ENCODE measurements at regions of chr19 and their contacts with region 1.

Region 1: DNA sequence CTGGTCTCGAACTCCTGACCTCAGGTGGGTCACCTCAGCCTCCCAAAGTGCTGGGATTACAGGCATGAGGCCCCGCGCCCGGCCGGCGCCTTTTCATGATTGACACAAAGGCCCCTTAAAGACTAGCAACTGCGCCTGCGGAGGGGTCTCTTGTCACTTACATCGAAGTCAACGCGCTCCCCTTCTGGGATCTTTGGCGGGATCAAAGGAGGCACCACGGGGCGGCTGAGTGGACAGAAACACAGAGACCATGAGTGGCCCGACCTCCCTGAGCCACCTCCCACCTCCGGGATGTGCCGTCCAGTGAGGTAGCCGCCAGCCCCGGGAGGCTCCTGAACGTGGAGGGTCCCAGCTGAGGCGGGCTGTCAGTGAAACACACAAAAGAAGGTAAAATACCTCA is 7.3 kb downstream of the TNNT1 start:
- DNase-seq: no peak
- ATAC-seq: no peak
- H3K4me3 Mint-ChIP-seq: no peak overlapping the region
- H3K27ac Mint-ChIP-seq: no peak overlapping the region
- H3K4me1 Mint-ChIP-seq: peaks cover 7% of the 10 kb centered on the region
- H3K27me3 Mint-ChIP-seq: peaks cover 20% of the 10 kb centered on the region

Region 2: DNA sequence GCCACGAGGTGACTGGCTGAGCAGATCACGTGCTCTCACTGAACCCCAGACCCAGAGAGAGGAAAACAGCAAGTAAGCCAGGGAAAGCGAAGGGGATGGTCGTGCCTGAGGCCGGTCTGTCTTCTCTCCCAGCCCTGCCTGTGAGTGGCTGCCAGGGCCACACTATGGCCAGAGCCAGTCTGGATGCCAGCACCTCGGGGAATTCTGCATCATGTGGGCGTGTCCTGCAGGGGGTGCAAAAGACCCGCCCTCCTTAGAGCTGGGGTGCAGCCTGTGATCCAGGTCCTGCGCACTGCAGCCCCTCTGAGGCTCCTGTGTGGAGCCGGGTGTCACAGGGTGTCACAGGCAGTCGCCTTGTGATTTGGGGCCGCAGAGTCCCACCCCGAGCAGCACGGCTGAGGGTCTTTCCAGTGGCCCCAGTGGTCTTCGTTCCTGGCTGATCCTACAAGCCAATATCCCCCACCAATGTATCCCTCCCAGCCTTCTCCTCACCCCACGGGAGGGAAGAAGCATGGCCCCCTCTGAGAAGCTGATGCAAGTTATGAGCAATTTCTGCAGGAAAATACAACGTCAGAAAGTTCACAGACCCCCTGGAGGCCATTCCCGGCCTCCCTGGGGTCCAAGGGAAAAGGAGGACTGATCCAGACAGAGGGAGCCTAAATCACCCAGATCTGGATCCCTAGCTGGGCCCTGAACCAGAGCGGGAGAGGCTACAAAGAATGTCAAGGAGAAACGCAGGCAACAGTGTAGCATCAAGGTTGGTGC is 32.0 kb before region 1 on chr19:
- CTCF ChIA-PET with region 1: no interaction called
- POLR2A ChIA-PET with region 1: no interaction called
- DNase-seq: no peak
- ATAC-seq: no peak
- H3K4me3 Mint-ChIP-seq: no peak overlapping the region
- H3K27ac Mint-ChIP-seq: no peak overlapping the region
- H3K4me1 Mint-ChIP-seq: peaks cover 4% of the 10 kb centered on the region
- H3K27me3 Mint-ChIP-seq: no peaks in the 10 kb centered on the region

Region 3: GRCh38 chr19:55152010-55152409 is 10.3 kb after region 1 on chr19:
- CTCF ChIA-PET with region 1: interaction called, 12 read pairs
- POLR2A ChIA-PET with region 1: no interaction called
- DNase-seq: no peak
- ATAC-seq: no peak
- H3K4me3 Mint-ChIP-seq: no peak overlapping the region
- H3K27ac Mint-ChIP-seq: peak overlapping the region; percentile 89
- H3K4me1 Mint-ChIP-seq: peaks cover 33% of the 10 kb centered on the region
- H3K27me3 Mint-ChIP-seq: peaks cover 33% of the 10 kb centered on the region